CD4-positive, alpha-beta memory T cell (primary cell): ENCODE measurements at regions of chr19 and their contacts with region 1.

Region 1: GRCh38 chr19:47436712-47437401 is 17.5 kb upstream of the MEIS3 start:
- DNase-seq: peak; percentile 71 to 82 (median 78)
- H3K4me3 ChIP-seq: no peak overlapping the region
- H3K4me3 Mint-ChIP-seq: peak overlapping the region in 4 of 8 donors; percentile 14 to 46 (median 34)
- H3K27ac ChIP-seq: no peak overlapping the region
- H3K27ac Mint-ChIP-seq: peak overlapping the region in 5 of 7 donors; percentile 19 to 80 (median 46)
- H3K4me1 ChIP-seq: peaks cover 13% of the 10 kb centered on the region
- H3K4me1 Mint-ChIP-seq: peaks cover 7 to 21% (median 17%) of the 10 kb centered on the region in 4 donors
- H3K27me3 ChIP-seq: peaks cover 6% of the 10 kb centered on the region
- H3K27me3 Mint-ChIP-seq: peaks cover 24 to 37% of the 10 kb centered on the region in 2 donors

Region 2: GRCh38 chr19:47305309-47305751 is 131.5 kb before region 1 on chr19:
- CTCF ChIA-PET with region 1: no interaction called
- POLR2A ChIA-PET with region 1: no interaction called
- intact Hi-C with region 1: no loop called
- DNase-seq: peak; percentile 29 to 47 (median 43)
- H3K4me3 ChIP-seq: no peak overlapping the region
- H3K4me3 Mint-ChIP-seq: peak overlapping the region in 1 of 8 donors; percentile 38
- H3K27ac ChIP-seq: no peak overlapping the region
- H3K27ac Mint-ChIP-seq: peak overlapping the region in 1 of 7 donors; percentile 35
- H3K4me1 ChIP-seq: peaks cover 5% of the 10 kb centered on the region
- H3K4me1 Mint-ChIP-seq: peaks cover 3 to 10% (median 7%) of the 10 kb centered on the region in 4 donors
- H3K27me3 ChIP-seq: no peaks in the 10 kb centered on the region
- H3K27me3 Mint-ChIP-seq: peaks cover 5 to 11% of the 10 kb centered on the region in 2 donors

Region 3: GRCh38 chr19:47467914-47468313 is 31.1 kb after region 1 on chr19:
- CTCF ChIA-PET with region 1: no interaction called
- POLR2A ChIA-PET with region 1: no interaction called
- intact Hi-C with region 1: no loop called
- DNase-seq: no peak
- H3K4me3 ChIP-seq: no peak overlapping the region
- H3K4me3 Mint-ChIP-seq: no peak overlapping the region
- H3K27ac ChIP-seq: no peak overlapping the region
- H3K27ac Mint-ChIP-seq: peak overlapping the region in 1 of 7 donors; percentile 18
- H3K4me1 ChIP-seq: peaks cover 12% of the 10 kb centered on the region
- H3K4me1 Mint-ChIP-seq: peaks cover 10 to 14% (median 11%) of the 10 kb centered on the region in 4 donors
- H3K27me3 ChIP-seq: peaks cover 37% of the 10 kb centered on the region
- H3K27me3 Mint-ChIP-seq: peaks cover 52% of the 10 kb centered on the region in 2 donors

Region 4: GRCh38 chr19:47483800-47484690 is 47.2 kb after region 1 on chr19 and contains the start of gene KPTN:
- CTCF ChIA-PET with region 1: interaction called, 14 read pairs
- POLR2A ChIA-PET with region 1: no interaction called
- intact Hi-C with region 1: loop called (anchors 5 kb)
- DNase-seq: peak; percentile 87 to 92 (median 90)
- H3K4me3 ChIP-seq: peak within 1 kb of the TSS; percentile 44 to 72
- H3K4me3 Mint-ChIP-seq: peak within 1 kb of the TSS; percentile 91 to 100 (median 98)
- H3K27ac ChIP-seq: peak within 1 kb of the TSS; percentile 86
- H3K27ac Mint-ChIP-seq: peak within 1 kb of the TSS; percentile 96 to 100 (median 99)
- H3K4me1 ChIP-seq: peaks cover 21% of the 10 kb centered on the region
- H3K4me1 Mint-ChIP-seq: peaks cover 16 to 42% (median 22%) of the 10 kb centered on the region in 4 donors
- H3K27me3 ChIP-seq: no peaks in the 10 kb centered on the region
- H3K27me3 Mint-ChIP-seq: no peaks in the 10 kb centered on the region
- total RNA-seq, gene KPTN: 4.0 to 4.3 TPM

Region 5: GRCh38 chr19:47697863-47698609 is 261.2 kb after region 1 on chr19:
- CTCF ChIA-PET with region 1: interaction called, 293 read pairs
- POLR2A ChIA-PET with region 1: interaction called, 5 read pairs
- intact Hi-C with region 1: no loop called
- DNase-seq: peak; percentile 46 to 54 (median 51)
- H3K4me3 ChIP-seq: no peak overlapping the region
- H3K4me3 Mint-ChIP-seq: no peak overlapping the region
- H3K27ac ChIP-seq: no peak overlapping the region
- H3K27ac Mint-ChIP-seq: no peak overlapping the region
- H3K4me1 ChIP-seq: no peaks in the 10 kb centered on the region
- H3K4me1 Mint-ChIP-seq: peaks cover 0 to 4% (median 2%) of the 10 kb centered on the region in 4 donors
- H3K27me3 ChIP-seq: no peaks in the 10 kb centered on the region
- H3K27me3 Mint-ChIP-seq: no peaks in the 10 kb centered on the region

Region 6: GRCh38 chr19:47707135-47707925 is 270.5 kb after region 1 on chr19:
- CTCF ChIA-PET with region 1: interaction called, 293 read pairs
- POLR2A ChIA-PET with region 1: interaction called, 10 read pairs
- intact Hi-C with region 1: loop called (anchors 1 kb)
- DNase-seq: peak; percentile 62 to 70 (median 68)
- H3K4me3 ChIP-seq: no peak overlapping the region
- H3K4me3 Mint-ChIP-seq: no peak overlapping the region
- H3K27ac ChIP-seq: no peak overlapping the region
- H3K27ac Mint-ChIP-seq: peak overlapping the region in 2 of 7 donors; percentile 24 to 27
- H3K4me1 ChIP-seq: no peaks in the 10 kb centered on the region
- H3K4me1 Mint-ChIP-seq: peaks cover 0 to 7% (median 3%) of the 10 kb centered on the region in 4 donors
- H3K27me3 ChIP-seq: no peaks in the 10 kb centered on the region
- H3K27me3 Mint-ChIP-seq: peaks cover 6 to 15% of the 10 kb centered on the region in 2 donors